Ascending aorta (tissue), 2 donors: ENCODE measurements at regions of chr7 and their contacts with region 1.

Region 1: GRCh38 chr7:107725151-107725740 is 18.7 kb upstream of the CBLL1 start:
- DNase-seq: no peak
- H3K4me3 ChIP-seq: no peak overlapping the region
- H3K27ac ChIP-seq: no peak overlapping the region
- H3K4me1 ChIP-seq: no peaks in the 10 kb centered on the region
- H3K27me3 ChIP-seq: no peaks in the 10 kb centered on the region
- CTCF ChIP-seq: peak; percentile 46 to 71 (median 63)

Region 2: DNA sequence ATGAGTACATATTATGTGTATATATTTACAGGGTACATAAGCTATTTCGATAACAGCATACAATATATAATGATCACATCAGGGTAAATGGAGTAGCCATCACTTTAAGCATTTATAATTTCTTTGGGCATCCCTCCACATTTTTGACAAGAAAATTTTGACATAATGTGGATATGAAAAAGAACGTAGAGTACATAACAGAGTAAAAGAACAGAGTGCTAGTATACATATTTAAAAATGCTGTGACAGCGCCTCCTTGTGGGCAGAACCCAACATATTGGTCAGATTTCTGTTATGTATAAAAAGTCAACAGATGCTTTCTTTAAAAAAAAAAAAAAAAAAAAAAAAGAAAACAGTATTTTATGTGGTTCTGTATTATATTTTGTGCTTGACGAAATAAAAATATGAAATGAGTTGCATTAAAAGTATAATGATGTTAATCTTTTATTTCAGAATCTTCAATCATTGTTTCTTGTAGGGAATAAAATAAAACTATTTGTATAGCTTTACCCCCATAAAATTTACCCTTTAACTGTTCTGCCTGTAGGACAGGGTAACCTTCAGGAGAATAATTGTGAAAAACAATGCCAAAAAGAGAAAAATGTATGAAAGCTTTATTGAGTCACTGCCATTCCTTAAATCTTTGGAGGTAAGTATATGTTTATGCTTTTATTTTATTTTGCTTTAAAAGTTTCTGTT is 574.7 kb before region 1 on chr7:
- intact Hi-C with region 1: loop called (anchors 10 kb)
- DNase-seq: peak in 1 of 2 donors; percentile 88
- H3K4me3 ChIP-seq: no peak overlapping the region
- H3K27ac ChIP-seq: no peak overlapping the region
- H3K4me1 ChIP-seq: peaks cover 0 to 2% of the 10 kb centered on the region in 2 donors
- H3K27me3 ChIP-seq: no peaks in the 10 kb centered on the region
- CTCF ChIP-seq: peak; percentile 34 to 62 (median 51)

Region 3: DNA sequence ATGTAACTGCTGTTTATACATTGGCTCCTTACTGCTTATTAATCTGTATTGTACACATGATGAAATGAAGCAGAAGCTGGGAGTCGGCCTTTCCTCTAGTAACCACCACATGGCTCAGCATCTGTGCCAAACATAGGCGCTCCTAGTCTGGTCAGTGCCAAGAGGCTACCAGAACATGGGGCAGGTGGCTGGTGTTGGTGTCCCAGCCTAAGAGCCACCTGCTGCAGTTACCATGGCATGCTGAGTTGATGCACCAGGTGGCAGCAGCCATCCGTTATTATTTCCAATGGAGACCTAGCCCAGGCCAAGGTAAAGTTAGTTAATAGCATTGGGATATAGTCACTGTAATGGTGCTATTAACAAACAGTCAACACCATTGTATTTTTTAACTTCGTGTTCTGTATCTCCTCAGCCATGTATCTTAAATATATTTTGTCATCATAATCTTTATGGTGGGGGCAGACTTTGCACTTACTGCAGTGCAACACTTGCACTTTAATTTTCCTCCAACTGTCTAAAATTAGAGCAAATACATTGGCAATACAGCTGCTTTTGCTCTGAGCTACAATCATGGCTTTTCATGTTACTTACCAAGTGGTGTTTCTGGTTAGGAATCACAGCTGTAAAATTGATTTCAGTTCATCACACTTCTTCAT is 523.3 kb before region 1 on chr7:
- intact Hi-C with region 1: loop called (anchors 10 kb)
- DNase-seq: no peak
- H3K4me3 ChIP-seq: no peak overlapping the region
- H3K27ac ChIP-seq: no peak overlapping the region
- H3K4me1 ChIP-seq: no peaks in the 10 kb centered on the region
- H3K27me3 ChIP-seq: no peaks in the 10 kb centered on the region
- CTCF ChIP-seq: peak in 2 of 3 experiments; percentile 12 to 61